PC-9 (cell line): ENCODE measurements at regions of chr19 and their contacts with region 1.

Region 1: DNA sequence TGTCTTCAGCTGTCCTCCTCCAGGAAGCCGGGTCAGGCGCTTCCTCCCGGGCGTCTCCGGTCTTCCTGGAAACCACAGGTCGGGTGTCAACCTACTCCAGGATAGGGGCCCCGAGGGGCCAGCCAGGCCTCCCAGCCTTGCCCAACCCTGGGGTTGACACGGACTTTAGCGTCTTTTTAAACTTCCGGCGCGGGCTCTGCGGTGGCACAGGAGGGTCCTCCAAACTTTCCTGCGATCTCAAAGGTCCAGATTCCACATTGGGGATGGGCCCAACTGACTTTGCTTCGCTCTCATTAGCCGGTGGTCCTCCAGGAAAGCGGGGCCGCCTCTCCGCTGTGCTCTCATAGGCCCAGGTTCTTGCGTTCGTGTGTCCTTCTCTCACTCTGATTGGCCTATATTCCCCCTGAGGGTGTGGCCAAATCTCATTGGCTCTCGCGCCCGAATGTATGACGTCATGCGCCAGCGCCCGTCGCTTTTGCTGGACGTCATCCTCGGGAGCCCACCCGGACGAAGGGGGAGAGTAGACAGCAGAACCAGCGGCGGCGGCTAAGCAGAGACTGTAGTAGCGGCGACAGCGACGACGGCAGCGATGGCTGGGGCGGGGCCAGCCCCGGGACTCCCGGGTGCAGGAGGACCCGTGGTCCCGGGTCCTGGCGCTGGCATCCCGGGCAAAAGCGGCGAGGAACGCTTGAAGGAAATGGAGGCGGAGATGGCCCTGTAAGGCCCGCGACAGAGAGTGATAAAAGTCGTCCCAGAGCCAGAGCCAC is at the start of gene RBM42:
- DNase-seq: peak; percentile 97
- H3K4me3 ChIP-seq: peak within 1 kb of the TSS; percentile 93
- H3K27ac ChIP-seq: peak within 1 kb of the TSS; percentile 66
- H3K4me1 ChIP-seq: peaks cover 5% of the 10 kb centered on the region; the same call in 1 of the 2 replicates
- H3K27me3 ChIP-seq: no peaks in the 10 kb centered on the region
- CTCF ChIP-seq: no peak
- total RNA-seq, gene RBM42: 110 and 153 TPM in 2 replicates

Region 2: GRCh38 chr19:35612559-35613321 is 16.0 kb before region 1 on chr19 and contains the start of gene HAUS5:
- CTCF ChIA-PET with region 1: no interaction called
- POLR2A ChIA-PET with region 1: no interaction called
- intact Hi-C with region 1: loop called (anchors 1 kb)
- DNase-seq: peak; percentile 82 to 95
- H3K4me3 ChIP-seq: peak within 1 kb of the TSS; percentile 68
- H3K27ac ChIP-seq: no peak within 1 kb of the TSS
- H3K4me1 ChIP-seq: 0 out of 2 replicates have a peak, but pooled peaks cover 5% of the 10 kb centered on the region
- H3K27me3 ChIP-seq: no peaks in the 10 kb centered on the region
- CTCF ChIP-seq: no peak
- total RNA-seq, gene HAUS5: 21.7 and 23.5 TPM in 2 replicates

Region 3: GRCh38 chr19:35790981-35791813 is 162.4 kb after region 1 on chr19:
- CTCF ChIA-PET with region 1: no interaction called
- POLR2A ChIA-PET with region 1: no interaction called
- intact Hi-C with region 1: no loop called
- DNase-seq: no peak
- H3K4me3 ChIP-seq: no peak overlapping the region
- H3K27ac ChIP-seq: no peak overlapping the region
- H3K4me1 ChIP-seq: no peaks in the 10 kb centered on the region
- H3K27me3 ChIP-seq: peaks cover 24% of the 10 kb centered on the region
- CTCF ChIP-seq: no peak